Pancreas (tissue), 10 donors: ENCODE measurements at regions of chr17 and their contacts with region 1.

Region 1: GRCh38 chr17:44775136-44775837 is 16.5 kb downstream of the ADAM11 start:
- DNase-seq: peak in 3 of 6 donors; percentile 95 to 99 (median 97)
- ATAC-seq: peak; percentile 91 to 95 (median 93)
- H3K4me3 ChIP-seq: peak overlapping the region; percentile 34 to 75 (median 38)
- H3K27ac ChIP-seq: peak overlapping the region in 2 of 4 donors; percentile 31 to 52
- H3K4me1 ChIP-seq: peaks cover 0 to 8% (median 0%) of the 10 kb centered on the region in 3 donors
- H3K27me3 ChIP-seq: no peaks in the 10 kb centered on the region
- CTCF ChIP-seq: peak in 1 of 4 donors; percentile 0

Region 2: DNA sequence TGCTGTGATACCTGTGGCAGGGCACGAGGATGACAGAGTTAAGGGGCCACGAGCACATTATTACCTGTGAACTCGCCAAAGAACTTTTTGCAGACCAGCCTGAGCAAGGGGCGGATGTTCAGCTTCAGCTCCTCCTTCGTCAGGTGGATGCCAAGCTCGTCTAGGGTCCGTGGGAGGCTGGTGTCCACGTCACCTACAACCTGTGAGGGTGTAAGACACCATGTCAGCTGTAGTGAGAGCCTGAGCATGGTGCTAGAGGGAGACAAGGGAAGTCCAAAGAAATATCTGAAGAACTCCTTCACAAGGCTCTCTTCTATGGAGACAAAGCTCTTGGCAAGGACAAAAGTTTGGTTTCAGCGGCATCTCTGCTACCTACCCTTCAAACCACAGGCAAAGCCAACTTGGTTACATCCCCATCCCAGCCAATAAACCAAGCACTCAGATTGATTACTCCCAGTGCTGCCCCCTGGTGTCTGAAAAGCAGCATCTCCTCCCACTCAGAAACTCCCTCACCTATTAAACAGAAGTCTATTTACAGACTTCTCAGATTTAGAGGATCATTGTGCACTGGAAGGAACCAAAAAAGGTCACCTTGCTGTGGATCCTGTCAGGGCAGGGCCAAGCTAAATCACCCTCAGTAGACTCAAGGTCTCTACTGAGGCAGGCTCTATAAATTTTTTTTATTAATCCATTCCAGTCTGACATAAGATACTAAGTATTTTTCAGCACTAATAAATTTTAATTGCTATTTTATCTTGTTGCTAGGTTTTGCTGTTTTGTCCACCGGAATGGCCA is 89.8 kb after region 1 on chr17:
- intact Hi-C with region 1: loop called in 2 of 3 experiments (anchors 5 kb)
- DNase-seq: peak in 5 of 6 donors; percentile 44 to 63 (median 58)
- ATAC-seq: peak; percentile 66 to 92 (median 86)
- H3K4me3 ChIP-seq: no peak overlapping the region
- H3K27ac ChIP-seq: no peak overlapping the region
- H3K4me1 ChIP-seq: no peaks in the 10 kb centered on the region
- H3K27me3 ChIP-seq: no peaks in the 10 kb centered on the region
- CTCF ChIP-seq: peak; percentile 54 to 80 (median 76)

Region 3: DNA sequence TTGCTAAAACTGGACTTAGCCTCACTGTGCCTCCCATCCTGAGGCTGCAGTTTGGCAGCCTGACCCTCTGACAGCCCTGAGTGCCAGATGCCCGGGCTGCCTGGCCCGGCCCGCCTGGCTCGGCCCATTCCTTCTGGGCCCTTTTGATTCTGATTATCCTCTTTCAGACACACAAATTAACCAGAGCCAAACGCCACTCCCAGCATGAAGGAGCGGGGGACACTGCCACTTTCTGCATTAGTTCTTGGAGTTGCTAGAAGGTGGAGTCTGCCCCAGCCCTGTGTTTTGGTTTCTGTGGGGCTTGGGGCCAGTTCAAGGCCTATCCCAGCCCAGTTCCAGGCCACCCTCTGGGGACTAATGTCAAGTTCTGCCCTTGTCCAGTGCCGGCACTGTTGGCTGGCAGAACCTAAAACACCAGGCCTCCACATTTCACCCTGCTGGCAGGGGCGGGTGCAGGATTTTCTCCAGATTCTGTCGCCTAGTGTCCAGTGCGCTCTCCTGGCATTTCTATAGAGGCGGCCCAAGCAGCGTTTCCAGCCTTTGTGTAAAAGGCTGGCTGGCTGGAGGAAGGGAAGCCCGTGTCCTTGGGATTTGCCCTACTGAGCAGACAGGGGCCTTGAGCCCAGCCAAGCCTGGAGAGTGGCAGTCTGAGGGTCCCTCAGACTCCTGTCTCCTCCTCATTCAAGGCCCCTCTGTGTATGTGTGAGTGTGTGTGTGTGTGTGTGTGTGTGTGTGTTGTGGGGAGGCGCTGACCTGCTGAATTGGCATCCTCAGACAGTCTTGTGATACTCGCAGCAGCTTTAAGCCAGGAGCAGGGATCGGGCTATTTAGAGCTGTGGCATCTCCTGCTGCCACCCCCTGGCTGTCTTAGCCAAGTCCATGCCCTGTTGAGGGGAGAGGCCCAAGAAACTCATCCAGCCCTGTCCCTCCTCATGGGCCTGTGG is 335.7 kb after region 1 on chr17:
- intact Hi-C with region 1: loop called in 1 of 3 experiments (anchors 10 kb)
- DNase-seq: no peak
- ATAC-seq: peak in 2 of 4 donors; percentile 28 to 29
- H3K4me3 ChIP-seq: no peak overlapping the region
- H3K27ac ChIP-seq: no peak overlapping the region
- H3K4me1 ChIP-seq: no peaks in the 10 kb centered on the region
- H3K27me3 ChIP-seq: no peaks in the 10 kb centered on the region
- CTCF ChIP-seq: no peak